PC-9 (cell line): ENCODE measurements at regions of chr4 and their contacts with region 1.

Region 1: DNA sequence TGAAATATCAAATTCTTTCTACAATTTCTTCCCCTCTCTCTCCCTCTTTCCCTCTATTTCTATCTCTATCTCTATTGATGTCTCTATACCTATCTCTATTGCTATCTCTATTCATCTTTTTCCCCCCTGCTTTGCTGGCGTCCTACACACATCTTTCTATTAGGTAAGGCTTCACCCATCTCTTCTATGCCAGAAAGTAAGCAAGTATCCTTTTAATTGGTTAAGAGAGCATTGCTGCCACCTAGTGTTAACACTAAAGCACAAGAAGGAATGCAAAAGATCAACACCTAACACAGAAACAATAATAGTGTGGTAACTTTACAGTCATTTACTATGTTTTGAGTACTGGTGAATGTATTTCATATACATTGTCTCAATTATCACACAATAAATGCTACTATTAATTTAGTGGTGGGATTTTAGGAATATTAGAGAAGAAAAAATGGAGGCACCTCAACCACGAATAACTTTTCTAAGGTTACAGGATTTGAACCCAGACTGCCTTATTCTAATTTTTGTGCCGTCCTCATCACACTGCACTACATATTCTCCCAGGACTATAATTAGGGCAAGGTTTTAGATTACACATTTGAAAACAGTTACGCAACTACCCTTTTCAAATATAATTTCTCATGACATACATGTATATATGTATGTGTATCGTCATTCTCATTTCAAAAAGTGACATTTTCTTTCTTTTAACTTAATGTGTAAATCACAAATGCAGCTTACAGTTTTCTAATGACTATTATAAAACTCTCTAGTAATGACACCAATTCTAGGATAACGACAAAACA is 3.7 kb upstream of the C4orf36 start:
- DNase-seq: peak in 1 of 2 experiments; percentile 50
- H3K4me3 ChIP-seq: no peak overlapping the region
- H3K27ac ChIP-seq: no peak overlapping the region
- H3K4me1 ChIP-seq: peaks cover 2% of the 10 kb centered on the region; the same call in 1 of the 2 replicates
- H3K27me3 ChIP-seq: no peaks in the 10 kb centered on the region
- CTCF ChIP-seq: peak; percentile 80

Region 2: GRCh38 chr4:86380243-86380642 is 515.6 kb before region 1 on chr4:
- CTCF ChIA-PET with region 1: no interaction called
- POLR2A ChIA-PET with region 1: no interaction called
- intact Hi-C with region 1: no loop called
- DNase-seq: peak in 1 of 2 experiments; percentile 60
- H3K4me3 ChIP-seq: no peak overlapping the region
- H3K27ac ChIP-seq: no peak overlapping the region
- H3K4me1 ChIP-seq: peaks cover 3% of the 10 kb centered on the region; the same call in 1 of the 2 replicates
- H3K27me3 ChIP-seq: no peaks in the 10 kb centered on the region
- CTCF ChIP-seq: no peak

Region 3: DNA sequence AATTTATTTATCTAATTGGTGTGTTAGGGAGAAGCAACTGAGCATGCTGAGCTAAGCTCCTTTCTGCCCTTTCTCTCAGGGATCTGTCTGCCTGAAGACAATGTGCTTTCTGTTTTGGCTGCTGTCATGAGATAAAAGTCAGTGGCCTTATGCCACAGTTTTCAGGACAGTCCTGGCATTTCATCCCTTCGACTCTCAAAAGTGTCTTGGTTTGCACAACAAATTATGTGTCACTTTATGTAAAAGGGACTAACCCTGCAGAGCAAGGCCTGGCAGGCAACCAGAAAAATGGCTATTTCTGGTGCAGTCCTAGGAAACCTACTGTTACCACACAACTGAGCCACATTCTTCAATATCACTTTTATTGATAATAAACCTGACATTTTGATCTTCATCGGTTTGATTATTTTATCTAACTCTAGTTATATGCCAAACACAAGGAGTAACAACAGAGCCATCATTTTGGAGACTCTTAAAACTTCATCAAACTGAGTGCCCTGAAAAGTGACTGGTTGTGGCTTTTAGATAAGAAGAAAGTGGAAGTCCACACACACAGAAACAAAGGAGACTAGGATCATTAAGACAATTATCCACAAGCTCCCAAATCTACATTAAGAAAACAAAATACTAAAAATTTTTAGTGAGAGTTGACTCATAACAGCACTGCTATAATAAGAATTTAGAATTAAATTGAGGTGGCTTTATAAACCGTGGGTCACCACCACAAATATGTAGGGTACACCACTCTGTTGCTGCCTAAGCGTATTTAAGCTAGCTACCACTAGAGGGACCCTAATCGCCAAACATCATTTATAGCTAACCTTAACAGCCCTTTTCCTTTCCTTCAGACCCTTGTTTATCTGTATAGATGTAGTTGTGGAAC is 397.7 kb before region 1 on chr4:
- CTCF ChIA-PET with region 1: interaction called, 3 read pairs
- POLR2A ChIA-PET with region 1: interaction called, 3 read pairs
- intact Hi-C with region 1: loop called (anchors 1 kb)
- DNase-seq: peak in 1 of 2 experiments; percentile 58
- H3K4me3 ChIP-seq: no peak overlapping the region
- H3K27ac ChIP-seq: no peak overlapping the region
- H3K4me1 ChIP-seq: peaks cover 40% of the 10 kb centered on the region
- H3K27me3 ChIP-seq: no peaks in the 10 kb centered on the region
- CTCF ChIP-seq: peak; percentile 79

Region 4: DNA sequence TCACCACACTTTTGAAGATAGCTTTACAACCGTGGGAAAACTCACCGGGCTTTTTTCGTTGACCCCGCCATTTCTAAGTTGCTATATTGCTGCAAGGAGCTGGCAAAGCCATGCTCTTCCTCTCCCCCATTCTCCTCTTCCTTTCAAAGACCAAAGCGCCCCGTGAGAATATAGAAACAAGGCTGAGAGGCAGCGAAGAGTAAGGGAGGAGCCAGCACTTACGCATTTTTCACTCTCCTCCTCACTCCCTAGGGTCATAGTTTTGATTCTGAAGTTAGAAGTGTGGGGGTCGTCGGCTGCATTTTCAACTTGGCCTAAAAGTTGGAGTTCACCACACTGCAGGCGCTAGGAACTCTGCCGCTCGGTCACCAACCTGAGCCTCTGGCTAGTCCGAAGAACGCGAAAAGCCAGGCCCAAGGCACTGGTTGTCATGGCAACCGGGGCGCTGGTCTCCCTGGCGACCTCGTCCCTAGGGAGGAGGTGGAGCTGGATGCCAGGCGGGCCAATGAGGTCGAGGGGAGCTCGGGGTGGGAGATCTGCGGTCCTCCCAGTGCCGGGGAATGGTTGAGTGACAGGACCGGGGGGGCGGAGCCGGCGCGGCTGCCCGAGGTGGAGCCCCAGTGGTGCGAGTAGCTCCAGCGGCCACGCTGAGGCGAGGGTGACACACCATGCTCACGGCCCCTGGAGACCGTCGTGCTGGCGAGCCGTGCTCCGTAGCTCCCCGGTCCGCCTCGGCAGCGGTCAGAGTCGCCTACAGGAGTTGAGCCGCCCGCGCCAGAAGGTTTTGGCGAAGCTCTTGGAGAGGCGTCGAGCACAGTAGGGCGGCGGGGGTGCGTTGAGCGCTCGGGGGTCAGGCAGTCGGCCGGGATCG is 302.0 kb before region 1 on chr4 and contains the start of gene PTPN13:
- CTCF ChIA-PET with region 1: no interaction called
- POLR2A ChIA-PET with region 1: no interaction called
- intact Hi-C with region 1: loop called (anchors 1 kb)
- DNase-seq: peak; percentile 91 to 95
- H3K4me3 ChIP-seq: peak within 1 kb of the TSS; percentile 79
- H3K27ac ChIP-seq: no peak within 1 kb of the TSS; the same call in 1 of the 2 replicates
- H3K4me1 ChIP-seq: peaks cover 28% of the 10 kb centered on the region
- H3K27me3 ChIP-seq: no peaks in the 10 kb centered on the region
- CTCF ChIP-seq: no peak
- total RNA-seq, gene PTPN13: 6.9 and 8.3 TPM in 2 replicates

Region 5: DNA sequence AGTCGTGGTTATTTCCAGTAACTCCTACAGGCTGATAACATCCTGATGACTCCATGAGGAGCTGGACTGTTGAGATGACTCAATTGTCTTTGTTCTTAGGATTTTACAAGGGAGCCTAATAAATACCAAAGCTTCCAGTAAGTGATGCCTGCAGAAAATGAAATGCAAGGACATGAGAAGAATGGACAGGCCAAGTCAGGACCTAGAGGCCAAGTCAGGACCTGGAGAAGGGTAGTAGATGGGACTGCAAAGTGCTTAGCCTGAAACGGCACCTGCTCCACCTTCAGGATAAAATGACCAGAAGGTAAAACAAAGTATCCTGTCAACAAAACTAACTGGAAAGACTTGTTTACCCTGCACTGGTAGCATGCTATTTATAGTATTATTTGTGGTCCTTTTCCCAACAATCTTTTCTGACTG is 40.3 kb before region 1 on chr4:
- CTCF ChIA-PET with region 1: no interaction called
- POLR2A ChIA-PET with region 1: no interaction called
- intact Hi-C with region 1: loop called (anchors 5 kb)
- DNase-seq: peak; percentile 24 to 78
- H3K4me3 ChIP-seq: peak overlapping the region; percentile 13; the same call in 1 of the 2 replicates
- H3K27ac ChIP-seq: peak overlapping the region; percentile 51
- H3K4me1 ChIP-seq: peaks cover 30% of the 10 kb centered on the region
- H3K27me3 ChIP-seq: no peaks in the 10 kb centered on the region
- CTCF ChIP-seq: no peak; the same call in 1 of the 2 replicates

Region 6: GRCh38 chr4:86878640-86879039 is 17.2 kb before region 1 on chr4:
- CTCF ChIA-PET with region 1: no interaction called
- POLR2A ChIA-PET with region 1: no interaction called
- intact Hi-C with region 1: no loop called
- DNase-seq: no peak
- H3K4me3 ChIP-seq: no peak overlapping the region
- H3K27ac ChIP-seq: no peak overlapping the region
- H3K4me1 ChIP-seq: no peaks in the 10 kb centered on the region
- H3K27me3 ChIP-seq: no peaks in the 10 kb centered on the region
- CTCF ChIP-seq: no peak

Region 7: DNA sequence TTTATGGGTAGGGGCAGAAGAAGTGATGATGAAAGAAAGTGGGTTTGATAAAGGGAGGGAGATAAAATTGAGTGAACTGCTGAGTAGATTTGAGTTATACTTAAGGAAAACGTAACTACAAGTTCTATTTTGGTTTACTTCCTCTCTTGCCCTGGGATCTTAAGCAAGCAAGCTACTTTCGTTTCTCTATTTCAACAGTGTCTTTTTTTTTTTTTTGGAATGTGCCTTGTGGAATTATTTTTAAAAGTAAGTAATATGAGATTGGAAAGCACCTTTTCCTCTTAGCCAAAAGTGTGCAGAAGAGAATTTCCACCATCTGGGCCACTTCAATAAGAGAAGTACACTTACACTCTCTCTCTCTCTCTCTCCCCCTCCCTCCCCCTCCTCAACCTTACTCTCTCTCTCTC is 12.4 kb after region 1 on chr4:
- CTCF ChIA-PET with region 1: no interaction called
- POLR2A ChIA-PET with region 1: no interaction called
- intact Hi-C with region 1: no loop called
- DNase-seq: no peak
- H3K4me3 ChIP-seq: no peak overlapping the region
- H3K27ac ChIP-seq: no peak overlapping the region
- H3K4me1 ChIP-seq: no peaks in the 10 kb centered on the region
- H3K27me3 ChIP-seq: no peaks in the 10 kb centered on the region
- CTCF ChIP-seq: no peak

Region 8: GRCh38 chr4:87121348-87122065 is 225.6 kb after region 1 on chr4:
- CTCF ChIA-PET with region 1: no interaction called
- POLR2A ChIA-PET with region 1: no interaction called
- intact Hi-C with region 1: no loop called
- DNase-seq: no peak
- H3K4me3 ChIP-seq: no peak overlapping the region
- H3K27ac ChIP-seq: no peak overlapping the region
- H3K4me1 ChIP-seq: no peaks in the 10 kb centered on the region
- H3K27me3 ChIP-seq: no peaks in the 10 kb centered on the region
- CTCF ChIP-seq: no peak

Region 9: DNA sequence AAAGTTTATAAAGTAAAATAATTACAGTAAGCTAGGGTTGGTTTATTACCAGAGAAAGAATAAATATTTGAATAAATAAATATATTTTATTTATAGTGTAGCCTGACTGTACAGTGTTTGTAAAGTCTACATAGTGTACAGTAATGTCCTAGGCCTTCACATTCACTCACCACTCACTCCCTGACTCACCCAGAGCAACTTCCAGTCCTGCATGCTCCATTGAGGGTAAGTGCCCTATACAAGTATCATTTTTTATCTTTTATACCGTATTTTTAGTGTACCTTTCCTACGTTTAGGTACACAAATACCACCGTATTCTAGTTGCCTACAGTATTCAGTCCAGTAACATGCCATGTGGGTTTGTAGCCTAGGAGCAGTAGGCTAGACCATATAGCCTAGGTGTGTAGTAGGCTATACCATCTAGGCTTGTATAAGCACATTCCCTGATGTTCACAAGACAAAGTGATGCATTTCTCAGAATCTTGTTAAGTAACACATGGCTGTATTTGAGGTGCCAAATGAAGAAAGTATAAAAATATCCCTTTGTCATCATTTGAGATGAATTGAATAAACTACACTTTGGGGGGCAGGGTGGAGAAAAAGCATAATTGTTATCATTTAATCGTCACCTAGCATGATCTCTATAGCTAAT is 339.3 kb after region 1 on chr4:
- CTCF ChIA-PET with region 1: no interaction called
- POLR2A ChIA-PET with region 1: no interaction called
- intact Hi-C with region 1: loop called (anchors 2 kb)
- DNase-seq: no peak
- H3K4me3 ChIP-seq: peak overlapping the region; percentile 75; the same call in 1 of the 2 replicates
- H3K27ac ChIP-seq: no peak overlapping the region
- H3K4me1 ChIP-seq: peaks cover 5% of the 10 kb centered on the region
- H3K27me3 ChIP-seq: no peaks in the 10 kb centered on the region
- CTCF ChIP-seq: no peak